ENCODE measurements at regions of chr15 and their contacts with region 1.

Region 1: DNA sequence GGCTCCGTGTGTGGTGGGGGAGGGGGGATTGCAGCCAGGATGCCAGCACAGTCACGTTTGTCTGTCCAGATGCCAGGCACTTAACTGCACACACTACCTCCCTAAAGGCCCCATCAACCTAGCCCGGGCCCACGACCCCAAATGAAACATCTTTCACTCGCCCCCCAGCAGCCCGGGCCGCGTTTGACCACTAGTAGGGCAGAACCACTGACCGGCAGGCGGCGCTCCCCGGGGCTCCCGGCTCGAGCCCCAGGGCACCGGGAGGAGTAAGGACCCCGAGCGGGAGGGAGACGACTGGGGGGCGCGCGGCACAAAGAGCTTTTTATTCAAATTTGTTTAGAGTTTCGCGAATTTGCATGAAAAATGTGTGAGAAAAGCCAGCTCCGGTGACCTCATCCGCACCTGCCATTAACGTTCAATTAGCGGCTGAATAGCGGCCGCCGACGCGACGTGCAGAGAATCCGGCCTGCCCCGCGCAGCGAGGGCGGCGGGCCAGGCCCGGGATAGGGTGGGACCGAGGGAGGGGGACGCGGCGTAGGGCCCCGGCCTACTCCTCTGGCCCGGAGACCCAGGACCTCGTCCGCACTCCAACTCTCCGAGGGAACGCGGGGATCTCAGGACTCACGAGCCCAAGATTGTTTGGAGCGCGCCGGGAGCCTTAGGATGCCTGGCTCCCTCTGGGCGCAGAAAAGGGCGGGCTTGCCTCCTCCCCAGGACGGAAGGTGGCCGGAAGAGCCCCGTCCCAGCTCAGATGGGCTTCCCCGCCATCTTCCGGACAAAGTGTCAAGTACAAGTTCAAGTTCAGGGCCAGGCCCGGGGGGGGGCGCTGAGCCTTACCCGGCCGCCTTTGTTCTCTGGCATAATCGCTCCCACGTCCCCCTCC is 64.9 kb upstream of the POLG start:
- DNase-seq: peak in 2 of 3 donors; percentile 39 to 48
- H3K4me3 ChIP-seq: peak overlapping the region in 6 of 7 experiments; percentile 24 to 63 (median 40)
- H3K27ac ChIP-seq: no peak overlapping the region
- H3K4me1 ChIP-seq: peaks cover 0 to 36% (median 32%) of the 10 kb centered on the region in 4 experiments
- H3K27me3 ChIP-seq: peaks cover 30 to 78% (median 51%) of the 10 kb centered on the region in 5 experiments

Region 2: DNA sequence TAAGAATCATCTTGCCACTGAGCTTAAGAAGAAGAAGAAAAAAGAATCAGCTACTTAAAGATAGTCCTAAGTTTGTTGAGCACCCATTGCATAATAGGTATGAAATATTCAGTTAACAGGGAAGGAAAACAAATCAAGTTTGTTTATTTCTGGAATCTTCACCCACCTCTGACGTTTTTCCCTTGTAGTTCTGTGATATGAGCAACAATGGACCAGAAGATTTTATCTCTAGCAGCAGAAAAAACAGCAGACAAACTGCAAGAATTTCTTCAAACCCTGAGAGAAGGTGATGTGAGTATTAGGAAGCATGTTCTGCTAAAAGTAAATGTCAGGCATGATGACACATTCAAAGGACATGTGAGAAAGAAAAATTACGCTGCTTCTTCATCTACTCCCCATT is 152.0 kb before region 1 on chr15:
- CTCF ChIA-PET with region 1: no interaction called
- POLR2A ChIA-PET with region 1: no interaction called
- DNase-seq: no peak
- H3K4me3 ChIP-seq: no peak overlapping the region
- H3K27ac ChIP-seq: no peak overlapping the region
- H3K4me1 ChIP-seq: peaks cover 6 to 22% (median 11%) of the 10 kb centered on the region in 4 experiments
- H3K27me3 ChIP-seq: peaks cover 0 to 3% (median 0%) of the 10 kb centered on the region in 5 experiments

Region 3: DNA sequence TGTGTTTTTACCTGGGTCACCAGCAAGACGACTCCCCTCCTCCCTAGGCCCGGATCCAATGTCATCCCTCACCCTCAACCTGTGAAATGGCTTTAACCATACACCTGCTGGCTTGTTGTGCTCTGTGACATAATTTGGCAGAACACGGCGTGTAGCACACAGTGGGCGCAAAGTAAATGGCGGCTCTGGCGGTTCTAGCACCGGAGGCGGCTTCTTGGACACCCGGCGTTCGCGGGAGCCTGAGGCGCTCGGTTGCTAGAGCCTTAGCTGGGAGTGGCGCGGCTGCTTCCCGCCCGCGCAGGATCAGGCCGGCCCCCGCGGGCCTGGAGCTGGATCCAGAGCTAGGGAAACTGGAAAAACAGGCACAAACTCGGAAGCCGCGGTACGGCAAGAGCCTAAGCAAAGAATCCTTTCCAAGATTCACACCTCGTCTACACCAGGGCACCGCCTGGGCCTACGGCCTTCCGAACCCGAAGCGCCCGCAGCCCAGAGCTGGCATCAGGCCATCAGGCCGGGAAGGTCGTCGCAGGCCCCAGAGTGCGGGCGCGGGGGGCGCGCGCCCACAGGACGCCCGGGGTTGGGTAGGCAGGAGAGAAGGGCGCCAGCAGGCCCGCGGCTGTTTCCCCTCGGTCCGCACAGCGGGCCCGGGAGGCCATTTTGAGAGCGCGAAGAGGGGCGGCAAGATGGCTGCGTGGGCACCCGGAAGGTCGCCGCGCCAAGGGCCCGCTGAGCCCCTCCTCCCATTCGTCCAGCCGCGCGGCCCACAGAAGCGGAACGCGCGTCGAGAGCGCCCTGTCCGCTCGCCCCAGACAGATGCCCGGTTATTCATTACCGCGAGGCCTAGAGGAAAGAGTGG is 21.0 kb before region 1 on chr15:
- CTCF ChIA-PET with region 1: interaction called, 11 read pairs
- POLR2A ChIA-PET with region 1: no interaction called
- DNase-seq: peak; percentile 34 to 68 (median 60)
- H3K4me3 ChIP-seq: peak overlapping the region; percentile 7 to 67 (median 34)
- H3K27ac ChIP-seq: no peak overlapping the region
- H3K4me1 ChIP-seq: peaks cover 0 to 20% (median 12%) of the 10 kb centered on the region in 4 experiments
- H3K27me3 ChIP-seq: peaks cover 13 to 99% (median 55%) of the 10 kb centered on the region in 5 experiments

Measured in common myeloid progenitor, CD34-positive (primary cell).